Activated CD4-positive, alpha-beta T cell treated with anti-CD3 and anti-CD28 coated beads, Interleukin-2, amount 10 ng/mL, durations not matched to agents 7 days and 5 days (primary cell): ENCODE measurements at regions of chr12 and their contacts with region 1.

Region 1: GRCh38 chr12:108618079-108618952 is 15.4 kb downstream of the SELPLG start:
- DNase-seq: peak; percentile 74
- H3K4me3 Mint-ChIP-seq: no peak overlapping the region
- H3K27ac Mint-ChIP-seq: peak overlapping the region; percentile 77
- H3K4me1 Mint-ChIP-seq: peaks cover 66% of the 10 kb centered on the region
- H3K27me3 Mint-ChIP-seq: no peaks in the 10 kb centered on the region

Region 2: GRCh38 chr12:108562348-108563135 is 55.8 kb before region 1 on chr12 and contains the start of gene ISCU:
- CTCF ChIA-PET with region 1: interaction called, 105 read pairs
- POLR2A ChIA-PET with region 1: interaction called, 5 read pairs
- DNase-seq: peak; percentile 98
- H3K4me3 Mint-ChIP-seq: peak within 1 kb of the TSS; percentile 100
- H3K27ac Mint-ChIP-seq: peak within 1 kb of the TSS; percentile 99
- H3K4me1 Mint-ChIP-seq: peaks cover 65% of the 10 kb centered on the region
- H3K27me3 Mint-ChIP-seq: no peaks in the 10 kb centered on the region
- total RNA-seq, gene ISCU: 60.8 to 66.0 TPM

Region 3: GRCh38 chr12:108568338-108569154 is 49.8 kb before region 1 on chr12:
- CTCF ChIA-PET with region 1: interaction called, 105 read pairs
- POLR2A ChIA-PET with region 1: interaction called, 6 read pairs
- DNase-seq: peak; percentile 88
- H3K4me3 Mint-ChIP-seq: peak overlapping the region; percentile 38
- H3K27ac Mint-ChIP-seq: peak overlapping the region; percentile 91
- H3K4me1 Mint-ChIP-seq: peaks cover 85% of the 10 kb centered on the region
- H3K27me3 Mint-ChIP-seq: no peaks in the 10 kb centered on the region

Region 4: GRCh38 chr12:108576660-108577234 is 41.6 kb before region 1 on chr12:
- CTCF ChIA-PET with region 1: interaction called, 105 read pairs
- POLR2A ChIA-PET with region 1: no interaction called
- DNase-seq: no peak
- H3K4me3 Mint-ChIP-seq: no peak overlapping the region
- H3K27ac Mint-ChIP-seq: no peak overlapping the region
- H3K4me1 Mint-ChIP-seq: peaks cover 49% of the 10 kb centered on the region
- H3K27me3 Mint-ChIP-seq: peaks cover 9% of the 10 kb centered on the region

Region 5: DNA sequence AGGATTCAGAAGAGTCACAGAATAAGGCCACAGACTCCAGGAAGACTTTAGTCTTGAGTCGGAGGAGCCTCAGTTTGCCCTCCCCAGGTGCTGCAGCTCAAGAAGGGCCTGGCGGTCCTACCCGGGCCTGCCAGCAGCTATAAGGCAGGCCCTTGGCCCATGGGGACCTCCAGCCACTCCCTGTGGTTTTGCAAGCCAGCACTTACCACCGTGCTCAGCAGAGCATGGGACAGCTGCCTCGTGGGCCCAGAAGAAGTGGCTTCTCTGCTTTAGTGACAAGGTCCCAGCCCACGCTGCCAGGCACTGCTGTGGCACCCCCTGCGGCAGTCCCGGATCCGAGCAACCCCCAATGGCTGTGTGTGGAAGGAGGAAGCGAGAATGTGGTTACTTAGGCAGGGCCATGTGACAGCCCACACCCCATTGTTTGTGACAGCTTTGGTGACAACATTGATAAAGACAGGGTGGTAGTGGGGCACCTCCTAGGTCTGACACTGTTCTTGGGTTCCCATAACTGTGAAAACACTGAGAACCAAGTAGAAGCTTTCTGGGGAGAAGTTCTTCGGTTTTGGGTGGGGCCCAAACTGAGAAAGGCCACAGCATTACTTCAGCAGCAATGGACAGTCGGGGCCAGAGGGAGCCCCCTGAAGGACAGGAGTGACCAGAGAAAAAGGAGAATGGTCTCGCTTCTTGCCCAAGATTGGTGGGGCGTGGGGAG is 15.4 kb after region 1 on chr12 and contains the start of gene SELPLG:
- CTCF ChIA-PET with region 1: interaction called, 115 read pairs
- POLR2A ChIA-PET with region 1: no interaction called
- DNase-seq: peak; percentile 94
- H3K4me3 Mint-ChIP-seq: peak within 1 kb of the TSS; percentile 98
- H3K27ac Mint-ChIP-seq: peak within 1 kb of the TSS; percentile 100
- H3K4me1 Mint-ChIP-seq: peaks cover 53% of the 10 kb centered on the region
- H3K27me3 Mint-ChIP-seq: no peaks in the 10 kb centered on the region
- total RNA-seq, gene SELPLG: 207 to 214 TPM

Region 6: DNA sequence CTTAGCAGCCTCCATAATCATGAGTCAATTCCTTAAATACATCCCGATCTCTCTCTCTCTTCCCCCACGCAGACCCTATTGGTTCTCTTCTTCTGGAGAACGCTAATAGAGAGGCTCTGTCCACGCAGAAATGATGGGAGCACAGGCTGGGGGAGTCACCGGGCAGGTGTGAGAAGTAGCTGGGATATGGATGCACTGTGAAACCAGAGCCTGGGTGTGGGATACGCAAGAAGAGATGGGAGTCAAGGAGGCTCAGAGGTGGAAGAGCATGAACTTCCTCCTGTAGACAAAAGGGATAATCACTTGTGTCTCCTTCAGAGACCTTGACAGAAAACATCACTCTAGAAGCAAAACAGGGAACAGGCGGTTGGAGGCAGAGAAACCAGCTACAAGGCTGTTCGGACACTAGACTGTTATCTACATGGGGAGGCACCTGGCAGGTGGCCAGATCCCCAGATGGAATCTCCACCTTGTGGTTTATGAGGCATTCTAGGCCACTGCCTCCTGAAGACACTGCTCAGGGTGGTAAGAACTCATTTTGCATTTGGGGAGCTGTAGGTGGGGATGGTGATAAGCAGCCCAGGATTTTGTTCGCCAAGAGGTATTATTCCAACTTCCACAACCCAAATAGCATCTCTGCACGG is 22.6 kb after region 1 on chr12:
- CTCF ChIA-PET with region 1: interaction called, 115 read pairs
- POLR2A ChIA-PET with region 1: no interaction called
- DNase-seq: no peak
- H3K4me3 Mint-ChIP-seq: no peak overlapping the region
- H3K27ac Mint-ChIP-seq: no peak overlapping the region
- H3K4me1 Mint-ChIP-seq: peaks cover 46% of the 10 kb centered on the region
- H3K27me3 Mint-ChIP-seq: no peaks in the 10 kb centered on the region